Heart left ventricle (tissue), 16 donors: ENCODE measurements at regions of chr21 and their contacts with region 1.

Region 1: GRCh38 chr21:16563795-16564194 is 834.0 kb downstream of the USP25 start:
- DNase-seq: peak in 1 of 5 donors; percentile 20
- ATAC-seq: peak in 2 of 4 donors; percentile 47 to 67
- H3K4me3 ChIP-seq: no peak overlapping the region
- H3K27ac ChIP-seq: no peak overlapping the region
- H3K4me1 ChIP-seq: peaks cover 0 to 37% (median 5%) of the 10 kb centered on the region in 12 donors
- H3K27me3 ChIP-seq: no peaks in the 10 kb centered on the region
- CTCF ChIP-seq: no peak
- POLR2A ChIP-seq: no peak

Region 2: DNA sequence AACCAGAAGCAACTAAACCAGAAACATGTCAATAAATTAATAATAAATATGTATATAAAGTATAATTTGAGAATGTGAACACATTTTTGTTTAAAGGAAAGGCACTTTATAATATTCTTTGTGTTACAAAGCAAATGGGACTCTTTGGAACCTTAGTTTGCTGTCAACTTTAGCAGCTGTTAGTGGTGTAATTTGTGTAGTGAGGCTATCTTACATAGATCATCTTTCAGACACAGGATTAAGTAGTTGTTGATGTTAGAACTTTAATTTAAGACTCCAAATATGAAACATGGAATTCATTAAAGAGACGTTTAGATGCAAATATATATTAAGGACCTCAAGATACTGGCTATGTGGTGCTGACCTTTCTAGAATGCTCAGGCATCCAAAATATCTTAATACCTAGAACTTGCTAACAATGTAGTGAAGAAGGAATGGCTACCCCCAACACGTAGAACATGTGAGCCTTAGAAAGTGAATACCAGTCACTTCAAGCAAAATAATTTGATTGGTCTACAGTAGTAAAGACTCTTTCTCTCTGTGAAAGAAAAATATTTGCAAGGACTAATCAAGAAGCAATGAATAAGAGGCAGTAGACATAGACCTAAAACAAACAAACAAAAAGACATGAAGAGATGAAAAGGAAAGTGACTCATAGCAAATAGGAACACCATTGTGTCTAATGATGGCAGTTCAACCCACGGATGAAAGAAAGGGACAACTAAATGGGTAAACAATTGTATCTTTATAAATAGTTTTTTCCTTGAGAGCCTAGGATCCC is 22.6 kb before region 1 on chr21:
- intact Hi-C with region 1: loop called in 1 of 10 experiments (anchors 2 kb)
- DNase-seq: no peak
- ATAC-seq: no peak
- H3K4me3 ChIP-seq: no peak overlapping the region
- H3K27ac ChIP-seq: no peak overlapping the region
- H3K4me1 ChIP-seq: peaks cover 0 to 16% (median 3%) of the 10 kb centered on the region in 12 donors
- H3K27me3 ChIP-seq: no peaks in the 10 kb centered on the region
- CTCF ChIP-seq: no peak
- POLR2A ChIP-seq: no peak